H1 (cell line): ENCODE measurements at regions of chr5 and their contacts with region 1.

Region 1: GRCh38 chr5:2110137-2110933 is 227.6 kb upstream of the IRX4 start:
- DNase-seq: no peak
- H3K4me3 ChIP-seq: no peak overlapping the region
- H3K27ac ChIP-seq: no peak overlapping the region
- H3K4me1 ChIP-seq: no peaks in the 10 kb centered on the region; a peak in 1 of 7 replicates
- H3K27me3 ChIP-seq: no peaks in the 10 kb centered on the region; a peak in 1 of 7 replicates
- CTCF ChIP-seq: peak in 1 of 3 experiments; percentile 9; a peak in 1 of 4 replicates
- EP300 ChIP-seq: no peak
- POLR2A ChIP-seq: no peak
- RAD21 ChIP-seq: no peak

Region 2: DNA sequence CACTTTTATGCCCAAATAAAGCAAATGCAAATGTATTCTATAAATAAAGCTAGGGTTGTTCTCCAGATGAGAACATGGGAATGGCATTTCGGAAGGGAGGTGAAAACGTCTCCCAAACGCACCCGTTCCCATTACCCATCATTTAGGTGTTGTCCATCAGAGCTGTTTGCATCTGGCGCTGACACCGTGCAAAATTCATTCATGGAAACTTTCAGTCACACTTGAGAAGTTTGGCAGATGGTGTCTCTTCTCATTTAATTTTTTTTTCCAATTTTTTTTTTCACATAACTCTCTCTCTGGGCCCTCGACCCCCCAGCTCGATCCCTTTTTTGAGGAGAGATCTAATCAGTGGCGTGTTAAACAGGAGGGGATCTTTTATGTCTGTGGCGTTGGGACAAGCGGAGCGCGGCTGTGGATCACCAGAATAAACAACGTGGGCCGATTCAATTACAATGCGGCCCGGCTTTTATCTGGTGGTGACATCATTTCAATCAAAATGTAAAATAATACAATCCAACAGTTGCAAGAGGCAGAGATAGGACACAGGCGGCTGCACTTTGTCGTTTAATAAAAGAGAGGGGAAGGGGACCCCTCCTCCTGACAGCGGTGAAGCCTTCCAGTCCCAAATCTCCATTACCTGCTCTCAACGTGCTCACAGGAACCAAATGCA is 18.5 kb after region 1 on chr5:
- CTCF ChIA-PET with region 1: interaction called, 15 read pairs
- POLR2A ChIA-PET with region 1: no interaction called
- DNase-seq: no peak
- H3K4me3 ChIP-seq: no peak overlapping the region
- H3K27ac ChIP-seq: no peak overlapping the region
- H3K4me1 ChIP-seq: no peaks in the 10 kb centered on the region; a peak in 1 of 7 replicates
- H3K27me3 ChIP-seq: no peaks in the 10 kb centered on the region
- CTCF ChIP-seq: no peak
- EP300 ChIP-seq: no peak
- POLR2A ChIP-seq: no peak
- RAD21 ChIP-seq: no peak